Natural killer cell (primary cell): ENCODE measurements at regions of chr3 and their contacts with region 1.

Region 1: DNA sequence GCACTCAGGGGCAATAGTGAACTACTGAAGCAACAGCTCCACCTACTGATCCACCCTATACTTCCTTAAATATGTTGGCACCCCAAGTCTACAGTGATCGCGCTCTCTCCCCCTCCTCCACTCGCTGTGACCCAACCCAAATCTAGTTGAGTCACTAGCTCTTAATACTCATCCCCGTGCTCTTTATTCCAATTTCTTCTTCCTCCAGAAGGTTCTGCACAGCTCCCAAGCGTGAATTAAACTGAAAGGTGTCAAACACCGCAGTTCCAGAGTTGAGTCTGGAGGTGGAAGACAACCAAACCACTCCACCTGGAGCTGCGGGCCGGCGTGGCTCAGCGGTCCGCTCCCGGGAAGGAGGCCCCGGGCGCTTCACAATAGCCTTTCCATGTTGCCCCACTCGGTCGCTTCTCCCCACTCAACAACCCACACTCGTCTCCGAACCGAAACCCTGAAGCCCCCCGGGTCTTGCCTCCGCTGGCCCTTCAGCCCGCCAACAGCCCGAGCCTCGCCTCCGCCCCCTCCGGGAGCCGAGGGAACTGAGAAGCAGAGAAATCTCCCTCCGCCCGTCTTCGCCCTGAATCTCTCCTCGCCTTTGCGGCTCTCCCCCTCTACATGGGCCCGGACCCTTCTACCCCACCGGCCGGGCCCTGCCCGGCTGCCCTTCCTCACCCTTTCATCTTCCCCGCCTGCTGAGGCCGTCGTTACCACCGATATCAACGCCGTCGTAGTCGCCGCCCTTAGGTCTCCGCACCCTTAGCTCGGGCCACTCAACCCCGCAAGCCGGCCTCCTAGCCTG is 578 bp downstream of the NAA50 start:
- DNase-seq: peak; percentile 63 to 94
- ATAC-seq: peak; percentile 65 to 85 (median 66)
- H3K4me3 ChIP-seq: peak overlapping the region; percentile 89
- H3K4me3 Mint-ChIP-seq: peak overlapping the region; percentile 100
- H3K27ac ChIP-seq: peak overlapping the region; percentile 96
- H3K27ac Mint-ChIP-seq: peak overlapping the region; percentile 93 to 100
- H3K4me1 ChIP-seq: peaks cover 25% of the 10 kb centered on the region
- H3K4me1 Mint-ChIP-seq: peaks cover 83% of the 10 kb centered on the region in 2 donors
- H3K27me3 ChIP-seq: no peaks in the 10 kb centered on the region
- H3K27me3 Mint-ChIP-seq: no peaks in the 10 kb centered on the region
- CTCF ChIP-seq: peak; percentile 68

Region 2: GRCh38 chr3:113485161-113485609 is 260.3 kb before region 1 on chr3:
- intact Hi-C with region 1: loop called (anchors 5 kb)
- DNase-seq: peak; percentile 64 to 69
- ATAC-seq: peak; percentile 82 to 88 (median 88)
- H3K4me3 ChIP-seq: peak overlapping the region; percentile 19
- H3K4me3 Mint-ChIP-seq: peak overlapping the region; percentile 81
- H3K27ac ChIP-seq: peak overlapping the region; percentile 72
- H3K27ac Mint-ChIP-seq: peak overlapping the region; percentile 84 to 95
- H3K4me1 ChIP-seq: peaks cover 12% of the 10 kb centered on the region
- H3K4me1 Mint-ChIP-seq: peaks cover 41 to 48% of the 10 kb centered on the region in 2 donors
- H3K27me3 ChIP-seq: no peaks in the 10 kb centered on the region
- H3K27me3 Mint-ChIP-seq: no peaks in the 10 kb centered on the region
- CTCF ChIP-seq: no peak

Region 3: GRCh38 chr3:113696658-113697499 is 48.6 kb before region 1 on chr3:
- intact Hi-C with region 1: loop called (anchors 1 kb)
- DNase-seq: peak; percentile 99
- ATAC-seq: peak; percentile 86 to 95 (median 87)
- H3K4me3 ChIP-seq: peak overlapping the region; percentile 83
- H3K4me3 Mint-ChIP-seq: no peak overlapping the region
- H3K27ac ChIP-seq: peak overlapping the region; percentile 90
- H3K27ac Mint-ChIP-seq: no peak overlapping the region
- H3K4me1 ChIP-seq: peaks cover 9% of the 10 kb centered on the region
- H3K4me1 Mint-ChIP-seq: peaks cover 20 to 21% of the 10 kb centered on the region in 2 donors
- H3K27me3 ChIP-seq: no peaks in the 10 kb centered on the region
- H3K27me3 Mint-ChIP-seq: no peaks in the 10 kb centered on the region
- CTCF ChIP-seq: no peak

Region 4: GRCh38 chr3:113795693-113796092 is 50.2 kb after region 1 on chr3:
- intact Hi-C with region 1: no loop called
- DNase-seq: peak in 1 of 2 donors; percentile 12
- ATAC-seq: no peak
- H3K4me3 ChIP-seq: no peak overlapping the region
- H3K4me3 Mint-ChIP-seq: no peak overlapping the region
- H3K27ac ChIP-seq: no peak overlapping the region
- H3K27ac Mint-ChIP-seq: no peak overlapping the region
- H3K4me1 ChIP-seq: no peaks in the 10 kb centered on the region
- H3K4me1 Mint-ChIP-seq: no peaks in the 10 kb centered on the region
- H3K27me3 ChIP-seq: no peaks in the 10 kb centered on the region
- H3K27me3 Mint-ChIP-seq: no peaks in the 10 kb centered on the region
- CTCF ChIP-seq: no peak

Region 5: GRCh38 chr3:113825090-113825489 is 79.6 kb after region 1 on chr3:
- intact Hi-C with region 1: no loop called
- DNase-seq: no peak
- ATAC-seq: no peak
- H3K4me3 ChIP-seq: no peak overlapping the region
- H3K4me3 Mint-ChIP-seq: no peak overlapping the region
- H3K27ac ChIP-seq: no peak overlapping the region
- H3K27ac Mint-ChIP-seq: no peak overlapping the region
- H3K4me1 ChIP-seq: peaks cover 4% of the 10 kb centered on the region
- H3K4me1 Mint-ChIP-seq: no peaks in the 10 kb centered on the region
- H3K27me3 ChIP-seq: no peaks in the 10 kb centered on the region
- H3K27me3 Mint-ChIP-seq: no peaks in the 10 kb centered on the region
- CTCF ChIP-seq: no peak

Region 6: GRCh38 chr3:113838631-113839209 is 93.2 kb after region 1 on chr3 and contains the start of gene GRAMD1C:
- intact Hi-C with region 1: loop called (anchors 1 kb)
- DNase-seq: peak; percentile 82 to 95
- ATAC-seq: peak; percentile 98 to 100 (median 99)
- H3K4me3 ChIP-seq: peak within 1 kb of the TSS; percentile 50
- H3K4me3 Mint-ChIP-seq: peak within 1 kb of the TSS; percentile 87
- H3K27ac ChIP-seq: peak within 1 kb of the TSS; percentile 15
- H3K27ac Mint-ChIP-seq: peak within 1 kb of the TSS in 1 of 2 donors; percentile 74
- H3K4me1 ChIP-seq: peaks cover 10% of the 10 kb centered on the region
- H3K4me1 Mint-ChIP-seq: peaks cover 7 to 8% of the 10 kb centered on the region in 2 donors
- H3K27me3 ChIP-seq: no peaks in the 10 kb centered on the region
- H3K27me3 Mint-ChIP-seq: peaks cover 0 to 2% of the 10 kb centered on the region in 2 donors
- CTCF ChIP-seq: peak; percentile 86
- total RNA-seq, gene GRAMD1C: 2.7 to 3.9 (median 3.6) TPM

Region 7: GRCh38 chr3:114056130-114057010 is 310.9 kb after region 1 on chr3 and contains the starts of genes CCDC191 and QTRT2:
- intact Hi-C with region 1: loop called (anchors 1 kb)
- DNase-seq: peak; percentile 97 to 100
- ATAC-seq: peak; percentile 94 to 98 (median 96)
- H3K4me3 ChIP-seq: peak within 1 kb of the TSS; percentile 82
- H3K4me3 Mint-ChIP-seq: peak within 1 kb of the TSS; percentile 98
- H3K27ac ChIP-seq: peak within 1 kb of the TSS; percentile 69
- H3K27ac Mint-ChIP-seq: peak within 1 kb of the TSS; percentile 95 to 96
- H3K4me1 ChIP-seq: peaks cover 6% of the 10 kb centered on the region
- H3K4me1 Mint-ChIP-seq: peaks cover 38 to 47% of the 10 kb centered on the region in 2 donors
- H3K27me3 ChIP-seq: no peaks in the 10 kb centered on the region
- H3K27me3 Mint-ChIP-seq: no peaks in the 10 kb centered on the region
- CTCF ChIP-seq: no peak
- total RNA-seq, gene CCDC191: 5.5 to 6.4 (median 5.7) TPM
- total RNA-seq, gene QTRT2: 30.1 to 33.4 (median 30.5) TPM

Region 8: DNA sequence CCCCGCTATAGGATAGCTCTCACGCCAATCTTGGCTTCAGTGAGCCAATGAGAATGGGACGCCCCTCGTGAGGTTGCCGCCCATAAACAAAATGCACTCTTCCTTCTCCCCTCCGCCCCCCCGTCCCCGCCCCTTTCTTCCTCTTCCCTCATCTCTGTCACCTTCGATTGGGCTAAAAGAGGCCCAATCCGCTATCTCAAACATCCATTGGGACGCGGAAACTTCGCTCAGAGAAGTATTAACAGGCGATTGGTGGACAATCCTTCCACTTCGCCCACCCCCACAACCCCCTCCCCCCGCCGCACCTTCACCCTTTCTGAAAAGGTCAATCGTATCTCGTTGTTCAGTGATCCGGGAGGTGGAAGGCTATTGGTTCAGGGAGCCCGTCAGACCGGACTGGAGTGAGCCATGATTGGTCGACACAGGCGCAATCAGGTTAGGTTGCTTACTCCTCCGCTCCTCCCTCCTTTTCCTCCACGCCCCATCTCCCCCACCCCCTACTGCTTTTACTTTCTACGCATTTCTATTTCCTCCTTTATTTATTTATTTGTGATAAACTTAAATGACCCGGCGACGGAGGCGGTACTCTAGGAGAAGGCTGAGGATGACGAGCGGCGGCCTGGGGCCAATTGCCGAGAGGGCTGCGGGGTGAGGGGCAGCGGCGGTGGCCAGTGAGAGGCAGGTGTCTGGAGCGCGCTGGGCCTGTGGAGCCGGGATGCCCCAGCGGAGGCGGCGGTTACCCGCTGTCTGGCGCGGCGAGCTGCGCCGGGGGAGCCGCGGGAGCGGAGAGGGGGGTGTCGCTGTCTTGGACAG is 1402.1 kb after region 1 on chr3:
- intact Hi-C with region 1: loop called (anchors 2 kb)
- DNase-seq: peak; percentile 92 to 100
- ATAC-seq: peak; percentile 71 to 87 (median 75)
- H3K4me3 ChIP-seq: peak overlapping the region; percentile 90
- H3K4me3 Mint-ChIP-seq: peak overlapping the region; percentile 93
- H3K27ac ChIP-seq: peak overlapping the region; percentile 96
- H3K27ac Mint-ChIP-seq: peak overlapping the region; percentile 90 to 99
- H3K4me1 ChIP-seq: peaks cover 10% of the 10 kb centered on the region
- H3K4me1 Mint-ChIP-seq: peaks cover 18 to 19% of the 10 kb centered on the region in 2 donors
- H3K27me3 ChIP-seq: no peaks in the 10 kb centered on the region
- H3K27me3 Mint-ChIP-seq: no peaks in the 10 kb centered on the region
- CTCF ChIP-seq: no peak